BJ (cell line): ENCODE measurements at regions of chr18 and their contacts with region 1.

Region 1: GRCh38 chr18:43587538-43588153 is 310.4 kb upstream of the SYT4 start:
- DNase-seq: no peak
- H3K4me3 ChIP-seq: no peak overlapping the region
- H3K27me3 ChIP-seq: no peaks in the 10 kb centered on the region
- CTCF ChIP-seq: peak; percentile 77

Region 2: GRCh38 chr18:43571078-43571689 is 16.5 kb before region 1 on chr18:
- CTCF ChIA-PET with region 1: interaction called, 226 read pairs
- POLR2A ChIA-PET with region 1: no interaction called
- DNase-seq: peak; percentile 4
- H3K4me3 ChIP-seq: no peak overlapping the region
- H3K27me3 ChIP-seq: no peaks in the 10 kb centered on the region
- CTCF ChIP-seq: peak; percentile 69

Region 3: GRCh38 chr18:43601432-43601831 is 13.8 kb after region 1 on chr18:
- CTCF ChIA-PET with region 1: interaction called, 18 read pairs
- POLR2A ChIA-PET with region 1: no interaction called
- DNase-seq: no peak
- H3K4me3 ChIP-seq: no peak overlapping the region
- H3K27me3 ChIP-seq: no peaks in the 10 kb centered on the region
- CTCF ChIP-seq: no peak